Activated CD4-positive, alpha-beta T cell treated with anti-CD3 and anti-CD28 coated beads for 36 hours (primary cell): ENCODE measurements at regions of chr10 and their contacts with region 1.

Region 1: DNA sequence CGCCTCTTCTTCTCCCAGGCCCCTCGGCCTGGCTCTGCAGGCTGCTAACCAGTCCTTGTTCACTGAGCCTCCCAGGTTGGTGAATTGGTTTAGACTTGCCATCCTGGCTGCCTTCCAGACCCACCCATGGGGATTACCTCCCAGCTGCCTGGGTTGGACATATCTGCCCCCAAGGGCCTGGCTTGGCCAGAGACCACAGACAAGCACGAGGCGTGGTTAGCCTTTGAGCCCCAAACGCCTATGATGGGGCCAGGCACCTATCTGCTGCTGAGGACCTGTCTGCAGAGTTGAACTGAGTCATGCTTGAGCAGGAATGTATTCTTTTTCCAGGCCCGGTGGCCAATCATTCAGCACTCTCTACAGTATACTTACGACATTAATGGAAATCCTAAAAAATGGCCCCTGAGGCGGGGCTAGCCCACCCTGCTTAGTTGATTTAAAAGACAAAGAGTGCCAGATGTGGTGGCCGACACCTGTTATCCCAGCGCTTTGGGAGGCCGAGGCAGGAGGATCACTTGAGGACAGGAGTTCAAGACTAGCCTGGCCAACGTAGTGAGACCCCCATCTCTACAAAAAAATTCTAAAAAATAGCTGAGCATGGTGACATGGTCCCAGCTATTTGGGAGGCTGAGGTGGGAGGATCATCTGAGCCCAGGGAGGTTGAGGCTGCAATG is 361.5 kb downstream of the FRMD4A start:
- DNase-seq: no peak
- ATAC-seq: no peak
- H3K4me3 Mint-ChIP-seq: no peak overlapping the region
- H3K27ac Mint-ChIP-seq: no peak overlapping the region
- H3K4me1 Mint-ChIP-seq: peaks cover 12% of the 10 kb centered on the region
- H3K27me3 Mint-ChIP-seq: peaks cover 5% of the 10 kb centered on the region

Region 2: DNA sequence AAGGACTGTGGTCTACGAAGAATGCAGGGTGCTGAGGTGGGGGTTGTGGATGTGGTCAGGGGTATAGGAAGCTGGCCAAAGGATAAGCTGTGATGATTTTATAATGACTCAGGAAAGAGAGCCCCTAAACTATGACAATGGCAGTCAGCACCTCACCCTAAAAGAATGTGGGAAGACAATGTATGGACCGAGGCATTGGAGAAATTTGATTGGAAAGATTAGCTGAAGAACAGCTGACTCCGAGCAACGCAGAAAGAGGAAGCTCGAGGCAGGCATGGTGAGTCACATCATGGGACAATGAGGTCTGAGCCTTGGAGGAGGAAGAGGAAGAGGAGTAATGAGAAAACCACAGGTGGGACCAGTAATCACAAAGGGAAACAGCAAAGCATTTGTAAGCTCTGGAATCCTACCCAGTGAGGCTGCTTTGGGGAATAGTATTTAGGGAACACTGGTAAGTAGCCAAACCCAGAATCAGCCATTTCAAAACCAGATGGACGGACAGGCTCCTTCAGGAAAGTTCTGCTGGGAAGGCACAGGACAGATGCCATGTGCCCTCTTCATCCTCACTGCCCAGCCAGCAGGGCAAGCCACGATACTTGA is 87.0 kb before region 1 on chr10:
- CTCF ChIA-PET with region 1: no interaction called
- POLR2A ChIA-PET with region 1: no interaction called
- intact Hi-C with region 1: no loop called
- DNase-seq: no peak
- ATAC-seq: no peak
- H3K4me3 Mint-ChIP-seq: no peak overlapping the region
- H3K27ac Mint-ChIP-seq: no peak overlapping the region
- H3K4me1 Mint-ChIP-seq: peaks cover 5% of the 10 kb centered on the region
- H3K27me3 Mint-ChIP-seq: peaks cover 5% of the 10 kb centered on the region

Region 3: GRCh38 chr10:14009371-14010100 is 40.3 kb after region 1 on chr10:
- CTCF ChIA-PET with region 1: interaction called, 3 read pairs
- POLR2A ChIA-PET with region 1: no interaction called
- intact Hi-C with region 1: loop called in 1 of 2 experiments (anchors 1 kb)
- DNase-seq: peak; percentile 84
- ATAC-seq: peak; percentile 88
- H3K4me3 Mint-ChIP-seq: peak overlapping the region; percentile 75
- H3K27ac Mint-ChIP-seq: peak overlapping the region; percentile 92
- H3K4me1 Mint-ChIP-seq: peaks cover 41% of the 10 kb centered on the region
- H3K27me3 Mint-ChIP-seq: peaks cover 3% of the 10 kb centered on the region

Region 4: DNA sequence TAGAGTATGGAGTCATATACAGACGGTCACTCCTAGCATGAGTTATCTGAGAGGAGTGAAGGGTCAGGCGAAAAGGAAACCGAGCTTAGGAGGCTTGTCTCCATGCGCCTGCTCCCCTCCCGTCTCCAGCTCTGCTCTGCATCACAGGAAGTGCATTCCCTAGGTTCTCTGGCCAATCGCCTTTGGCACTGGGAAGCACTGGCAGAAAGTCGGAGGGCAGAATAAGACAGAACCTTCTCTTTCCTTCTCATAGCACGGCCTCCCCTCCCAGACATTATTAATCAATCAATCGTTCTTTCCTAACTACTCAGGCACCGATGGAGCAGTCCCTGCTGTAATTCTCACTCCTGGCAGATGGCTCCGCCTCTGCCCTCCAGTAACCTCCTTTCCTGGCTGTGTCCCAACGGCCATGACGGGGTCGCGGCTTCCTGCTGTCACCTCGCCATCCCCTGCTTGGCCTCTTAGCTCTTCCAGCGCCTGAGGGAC is 184.4 kb after region 1 on chr10:
- CTCF ChIA-PET with region 1: no interaction called
- POLR2A ChIA-PET with region 1: no interaction called
- intact Hi-C with region 1: no loop called
- DNase-seq: no peak
- ATAC-seq: no peak
- H3K4me3 Mint-ChIP-seq: no peak overlapping the region
- H3K27ac Mint-ChIP-seq: no peak overlapping the region
- H3K4me1 Mint-ChIP-seq: no peaks in the 10 kb centered on the region
- H3K27me3 Mint-ChIP-seq: peaks cover 7% of the 10 kb centered on the region

Region 5: GRCh38 chr10:14282276-14282675 is 313.0 kb after region 1 on chr10:
- CTCF ChIA-PET with region 1: no interaction called
- POLR2A ChIA-PET with region 1: no interaction called
- intact Hi-C with region 1: no loop called
- DNase-seq: no peak
- ATAC-seq: no peak
- H3K4me3 Mint-ChIP-seq: no peak overlapping the region
- H3K27ac Mint-ChIP-seq: no peak overlapping the region
- H3K4me1 Mint-ChIP-seq: no peaks in the 10 kb centered on the region
- H3K27me3 Mint-ChIP-seq: peaks cover 15% of the 10 kb centered on the region